Endothelial cell of umbilical vein (primary cell): ENCODE measurements at regions of chr1 and their contacts with region 1.

Region 1: DNA sequence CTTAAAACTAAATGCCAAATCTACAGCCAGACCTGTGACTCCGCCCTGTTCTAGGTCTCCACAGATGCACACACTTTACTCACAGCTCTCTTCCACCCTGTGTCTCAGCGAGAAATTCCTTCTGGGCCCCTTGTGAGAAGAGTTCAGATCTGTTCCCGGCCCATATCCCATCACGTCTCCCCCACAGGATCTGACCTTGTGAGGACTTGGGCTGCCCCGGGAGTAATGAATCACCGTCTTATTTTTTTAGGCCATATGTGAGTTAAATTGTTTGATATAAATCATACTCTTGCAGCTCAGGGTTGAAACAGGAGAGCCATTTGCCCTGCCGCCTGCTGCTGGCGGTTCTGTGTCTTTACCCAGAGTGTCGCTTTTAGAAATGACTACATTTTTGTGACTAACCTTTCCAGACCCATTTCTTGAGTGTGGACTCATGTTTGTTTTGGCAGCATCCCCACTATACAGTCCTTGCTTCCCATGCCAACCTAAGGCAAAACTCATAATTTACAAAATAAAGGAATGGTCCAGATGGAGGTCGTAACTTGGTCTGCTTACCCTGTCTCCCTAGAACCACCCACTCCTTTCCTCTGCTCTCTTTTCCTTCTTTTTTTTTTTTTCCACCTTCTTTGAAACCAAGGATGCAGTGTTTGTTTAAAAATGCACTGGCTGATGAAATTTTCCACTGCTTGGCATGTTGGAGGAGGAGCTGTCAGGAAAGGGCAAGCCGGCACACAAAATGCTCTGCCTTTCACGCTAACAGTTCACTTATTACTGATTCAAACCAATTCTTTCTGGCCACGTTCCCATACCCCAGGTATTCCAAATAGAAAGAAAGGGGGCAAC is 98.0 kb upstream of the C1orf105 start:
- DNase-seq: peak; percentile 96
- H3K4me3 ChIP-seq: peak overlapping the region in 1 of 3 experiments; percentile 37
- H3K27ac ChIP-seq: peak overlapping the region; percentile 78
- H3K4me1 ChIP-seq: peaks cover 36% of the 10 kb centered on the region
- H3K27me3 ChIP-seq: no peaks in the 10 kb centered on the region
- CTCF ChIP-seq: no peak
- POLR2A ChIP-seq: no peak

Region 2: GRCh38 chr1:172041742-172042141 is 280.7 kb before region 1 on chr1:
- CTCF ChIA-PET with region 1: no interaction called
- POLR2A ChIA-PET with region 1: no interaction called
- dilution Hi-C with region 1: no loop called
- intact Hi-C with region 1: loop called (anchors 2 kb)
- DNase-seq: peak; percentile 45
- H3K4me3 ChIP-seq: no peak overlapping the region
- H3K27ac ChIP-seq: no peak overlapping the region
- H3K4me1 ChIP-seq: peaks cover 14% of the 10 kb centered on the region
- H3K27me3 ChIP-seq: no peaks in the 10 kb centered on the region
- CTCF ChIP-seq: peak; percentile 7 to 12
- POLR2A ChIP-seq: no peak

Region 3: GRCh38 chr1:172109359-172109758 is 213.1 kb before region 1 on chr1:
- CTCF ChIA-PET with region 1: interaction called, 4 read pairs
- POLR2A ChIA-PET with region 1: interaction called, 6 read pairs
- dilution Hi-C with region 1: no loop called
- intact Hi-C with region 1: loop called (anchors 2 kb)
- DNase-seq: peak; percentile 66
- H3K4me3 ChIP-seq: no peak overlapping the region
- H3K27ac ChIP-seq: peak overlapping the region; percentile 28
- H3K4me1 ChIP-seq: peaks cover 48% of the 10 kb centered on the region
- H3K27me3 ChIP-seq: no peaks in the 10 kb centered on the region
- CTCF ChIP-seq: no peak
- POLR2A ChIP-seq: no peak

Region 4: DNA sequence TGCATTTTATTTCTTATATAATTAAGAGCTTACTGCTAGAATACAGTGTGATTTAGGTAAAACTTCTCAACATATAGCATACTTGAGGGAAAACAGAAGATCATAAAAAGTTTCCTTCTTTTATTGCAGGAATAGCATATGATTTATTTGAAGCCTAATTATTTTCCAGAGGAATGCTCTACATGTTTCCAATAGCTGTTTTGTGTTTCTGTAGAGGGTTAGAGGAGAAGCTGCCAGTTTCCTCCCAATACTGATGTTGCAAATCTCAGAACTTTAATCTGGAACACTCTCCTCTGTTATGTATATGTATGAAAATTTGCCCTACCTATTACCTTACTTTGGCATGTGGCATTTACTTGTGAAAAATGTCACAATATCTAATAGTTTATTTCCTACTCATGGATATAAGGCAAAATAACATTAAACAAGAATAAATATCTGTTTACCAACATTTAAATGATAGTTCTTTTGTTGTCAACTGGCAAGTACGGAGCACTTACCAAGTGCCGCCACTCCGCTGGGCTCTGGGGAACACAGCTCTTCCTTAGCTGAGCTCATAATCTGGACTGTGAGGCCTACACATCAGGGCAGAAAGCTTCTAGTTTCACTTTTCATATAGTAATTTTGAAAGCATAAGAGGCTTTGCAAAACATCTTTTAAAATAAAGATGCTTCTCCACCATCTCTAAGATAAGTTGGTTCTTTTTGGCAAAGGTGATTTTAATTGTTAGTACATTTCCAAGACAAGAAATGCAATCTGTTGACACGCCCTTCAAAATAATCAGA is 141.7 kb before region 1 on chr1:
- CTCF ChIA-PET with region 1: no interaction called
- POLR2A ChIA-PET with region 1: no interaction called
- dilution Hi-C with region 1: no loop called
- intact Hi-C with region 1: loop called (anchors 5 kb)
- DNase-seq: peak; percentile 75
- H3K4me3 ChIP-seq: peak overlapping the region in 1 of 3 experiments; percentile 58
- H3K27ac ChIP-seq: peak overlapping the region; percentile 46
- H3K4me1 ChIP-seq: peaks cover 11% of the 10 kb centered on the region
- H3K27me3 ChIP-seq: no peaks in the 10 kb centered on the region
- CTCF ChIP-seq: no peak
- POLR2A ChIP-seq: no peak

Region 5: GRCh38 chr1:172343240-172344160 is 21.1 kb after region 1 on chr1:
- CTCF ChIA-PET with region 1: interaction called, 4 read pairs
- POLR2A ChIA-PET with region 1: interaction called, 7 read pairs
- dilution Hi-C with region 1: no loop called
- intact Hi-C with region 1: loop called (anchors 1 kb)
- DNase-seq: peak; percentile 86
- H3K4me3 ChIP-seq: peak overlapping the region in 1 of 3 experiments; percentile 32
- H3K27ac ChIP-seq: peak overlapping the region; percentile 99
- H3K4me1 ChIP-seq: peaks cover 26% of the 10 kb centered on the region
- H3K27me3 ChIP-seq: no peaks in the 10 kb centered on the region
- CTCF ChIP-seq: no peak
- POLR2A ChIP-seq: no peak

Region 6: DNA sequence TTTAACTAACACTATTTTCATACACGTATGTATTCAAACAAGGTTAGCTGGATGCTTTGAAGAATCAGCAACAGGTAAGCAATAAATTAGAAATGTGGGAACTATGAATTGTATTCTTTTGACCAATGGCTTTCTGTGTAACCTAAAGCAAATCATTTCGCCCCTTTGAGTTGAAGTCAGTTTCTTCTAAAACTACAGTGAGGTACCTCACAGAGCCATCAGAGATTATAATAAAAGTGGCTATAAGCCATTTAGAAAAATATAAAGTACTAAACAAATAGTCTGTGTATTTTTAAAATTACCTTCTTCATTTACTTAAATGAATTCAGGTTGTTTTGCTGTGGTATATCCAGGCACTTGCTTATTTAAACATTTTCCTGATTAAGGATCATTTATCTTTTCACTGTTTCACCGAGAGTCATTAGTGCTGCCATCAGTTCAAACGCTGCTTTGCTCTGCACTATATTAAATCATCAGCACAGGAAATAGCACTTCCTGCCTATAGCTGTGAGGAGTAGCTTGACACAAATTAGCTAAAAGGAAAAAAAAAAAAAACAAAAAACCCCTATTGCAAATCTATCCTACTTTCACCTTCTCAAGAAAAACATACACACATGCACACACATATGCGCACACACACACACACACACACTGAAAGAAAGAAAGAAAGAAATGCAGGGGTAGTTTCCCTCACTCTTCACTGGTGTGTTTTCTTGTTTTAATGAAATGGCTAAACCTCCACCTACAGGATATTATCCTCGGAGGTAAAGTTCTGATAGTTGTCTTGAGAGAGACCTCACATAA is 58.2 kb after region 1 on chr1:
- CTCF ChIA-PET with region 1: interaction called, 4 read pairs
- POLR2A ChIA-PET with region 1: no interaction called
- dilution Hi-C with region 1: no loop called
- intact Hi-C with region 1: loop called (anchors 1 kb)
- DNase-seq: peak; percentile 65
- H3K4me3 ChIP-seq: peak overlapping the region in 1 of 3 experiments; percentile 24
- H3K27ac ChIP-seq: peak overlapping the region; percentile 73
- H3K4me1 ChIP-seq: peaks cover 39% of the 10 kb centered on the region
- H3K27me3 ChIP-seq: no peaks in the 10 kb centered on the region
- CTCF ChIP-seq: no peak
- POLR2A ChIP-seq: no peak

Region 7: GRCh38 chr1:172532700-172533509 is 210.5 kb after region 1 on chr1 and contains the start of gene SUCO:
- CTCF ChIA-PET with region 1: no interaction called
- POLR2A ChIA-PET with region 1: no interaction called
- dilution Hi-C with region 1: no loop called
- intact Hi-C with region 1: loop called (anchors 10 kb)
- DNase-seq: peak; percentile 100
- H3K4me3 ChIP-seq: peak within 1 kb of the TSS; percentile 48 to 92 (median 70)
- H3K27ac ChIP-seq: peak within 1 kb of the TSS; percentile 84
- H3K4me1 ChIP-seq: peaks cover 16% of the 10 kb centered on the region
- H3K27me3 ChIP-seq: peaks cover 7 to 15% of the 10 kb centered on the region in 2 experiments
- CTCF ChIP-seq: peak in 1 of 2 donors; percentile 22
- POLR2A ChIP-seq: peak; percentile 73
- total RNA-seq, gene SUCO: 26.6 and 27.2 TPM in 2 replicates